Calu3 (cell line): ENCODE measurements at regions of chr1 and their contacts with region 1.

Region 1: DNA sequence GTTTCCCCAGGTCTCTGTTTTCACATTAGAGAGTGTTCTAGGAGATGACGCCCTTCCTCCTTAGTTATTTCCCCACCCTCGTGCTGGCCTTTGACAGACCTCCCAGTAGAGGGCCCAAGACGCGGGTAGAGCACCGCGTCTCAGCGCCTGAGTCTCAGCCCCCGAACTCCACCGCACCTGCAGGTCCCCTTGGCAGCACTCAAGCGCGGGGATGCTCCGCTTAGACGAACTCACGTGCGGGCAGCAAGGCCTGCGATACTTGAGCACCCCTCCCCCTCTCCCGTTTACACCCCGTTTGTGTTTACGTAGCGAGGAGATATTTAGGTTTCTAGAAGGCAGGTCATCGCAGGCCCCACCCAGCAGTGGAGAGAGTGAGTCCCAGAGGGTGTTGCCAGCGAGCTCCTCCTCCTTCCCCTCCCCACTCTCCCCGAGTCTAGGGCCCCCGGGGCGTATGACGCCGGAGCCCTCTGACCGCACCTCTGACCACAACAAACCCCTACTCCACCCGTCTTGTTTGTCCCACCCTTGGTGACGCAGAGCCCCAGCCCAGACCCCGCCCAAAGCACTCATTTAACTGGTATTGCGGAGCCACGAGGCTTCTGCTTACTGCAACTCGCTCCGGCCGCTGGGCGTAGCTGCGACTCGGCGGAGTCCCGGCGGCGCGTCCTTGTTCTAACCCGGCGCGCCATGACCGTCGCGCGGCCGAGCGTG is at the start of gene CD55:
- DNase-seq: peak; percentile 99
- H3K4me3 Mint-ChIP-seq: peak within 1 kb of the TSS; percentile 67
- H3K27ac Mint-ChIP-seq: peak within 1 kb of the TSS; percentile 82
- H3K4me1 Mint-ChIP-seq: peaks cover 37% of the 10 kb centered on the region
- H3K27me3 Mint-ChIP-seq: no peaks in the 10 kb centered on the region
- CTCF ChIP-seq: no peak
- total RNA-seq, gene CD55: 106 and 126 TPM in 2 replicates

Region 2: DNA sequence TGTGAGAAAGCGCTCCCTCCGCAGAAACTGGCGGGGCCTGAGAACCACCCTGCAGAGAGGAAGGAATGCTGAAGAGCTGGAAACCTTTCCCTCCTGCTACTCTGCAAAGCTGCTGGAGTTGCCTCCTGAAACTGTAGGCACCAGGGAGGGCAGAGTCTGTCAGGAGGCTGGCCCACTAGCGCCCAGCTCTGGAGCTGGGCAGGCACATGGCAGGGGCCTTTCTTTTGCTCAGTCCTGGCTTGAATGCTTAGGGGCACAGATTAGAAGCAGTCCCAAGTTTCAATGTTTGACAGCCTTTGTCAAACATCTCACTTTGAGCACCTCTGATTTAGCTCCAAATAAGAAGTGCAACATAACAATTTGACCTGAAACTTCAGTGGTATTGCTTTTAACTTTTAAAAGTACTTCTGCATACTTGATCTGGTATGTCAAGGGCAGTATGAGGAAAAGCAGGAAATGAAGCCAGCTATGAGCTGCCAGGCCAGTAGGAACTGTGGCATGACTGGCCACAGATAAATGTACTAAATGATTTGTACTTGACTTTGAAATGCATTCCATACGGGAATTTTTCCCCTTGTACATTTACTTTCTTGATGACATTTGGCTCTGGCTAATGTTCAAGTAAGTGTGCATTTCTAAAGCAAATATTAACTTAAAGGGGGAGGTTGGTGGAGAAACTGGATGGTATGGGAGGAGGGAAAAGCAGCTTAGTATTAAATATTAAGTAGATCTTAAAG is 295.9 kb before region 1 on chr1:
- CTCF ChIA-PET with region 1: no interaction called
- intact Hi-C with region 1: loop called (anchors 10 kb)
- DNase-seq: no peak
- H3K4me3 Mint-ChIP-seq: peak overlapping the region; percentile 92
- H3K27ac Mint-ChIP-seq: peak overlapping the region; percentile 98
- H3K4me1 Mint-ChIP-seq: peaks cover 96% of the 10 kb centered on the region
- H3K27me3 Mint-ChIP-seq: no peaks in the 10 kb centered on the region
- CTCF ChIP-seq: no peak

Region 3: DNA sequence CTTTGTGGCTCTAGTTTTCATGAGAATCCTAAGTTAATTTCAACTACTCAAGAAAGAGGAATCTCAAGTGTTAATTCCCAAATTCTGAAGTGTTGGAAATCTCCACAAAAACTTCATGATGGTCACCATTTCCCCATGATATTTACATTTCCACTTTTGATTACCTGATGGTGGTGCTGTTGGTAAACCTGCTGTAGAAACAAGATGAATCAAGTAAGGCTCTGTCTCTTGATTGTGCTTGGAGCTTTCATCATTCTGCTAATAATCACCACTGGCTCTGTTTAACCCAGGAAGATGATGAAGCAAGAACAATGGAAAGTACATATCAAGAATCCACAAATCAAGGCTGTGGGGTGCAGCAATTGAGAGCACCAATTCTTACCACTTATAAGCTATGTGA is 139.4 kb before region 1 on chr1:
- CTCF ChIA-PET with region 1: interaction called, 4 read pairs
- intact Hi-C with region 1: loop called (anchors 2 kb)
- DNase-seq: no peak
- H3K4me3 Mint-ChIP-seq: no peak overlapping the region
- H3K27ac Mint-ChIP-seq: no peak overlapping the region
- H3K4me1 Mint-ChIP-seq: peaks cover 5% of the 10 kb centered on the region
- H3K27me3 Mint-ChIP-seq: no peaks in the 10 kb centered on the region
- CTCF ChIP-seq: no peak

Region 4: GRCh38 chr1:207221934-207222351 is 99.3 kb before region 1 on chr1:
- CTCF ChIA-PET with region 1: no interaction called
- intact Hi-C with region 1: no loop called
- DNase-seq: no peak
- H3K4me3 Mint-ChIP-seq: no peak overlapping the region
- H3K27ac Mint-ChIP-seq: peak overlapping the region; percentile 19
- H3K4me1 Mint-ChIP-seq: peaks cover 52% of the 10 kb centered on the region
- H3K27me3 Mint-ChIP-seq: no peaks in the 10 kb centered on the region
- CTCF ChIP-seq: no peak

Region 5: DNA sequence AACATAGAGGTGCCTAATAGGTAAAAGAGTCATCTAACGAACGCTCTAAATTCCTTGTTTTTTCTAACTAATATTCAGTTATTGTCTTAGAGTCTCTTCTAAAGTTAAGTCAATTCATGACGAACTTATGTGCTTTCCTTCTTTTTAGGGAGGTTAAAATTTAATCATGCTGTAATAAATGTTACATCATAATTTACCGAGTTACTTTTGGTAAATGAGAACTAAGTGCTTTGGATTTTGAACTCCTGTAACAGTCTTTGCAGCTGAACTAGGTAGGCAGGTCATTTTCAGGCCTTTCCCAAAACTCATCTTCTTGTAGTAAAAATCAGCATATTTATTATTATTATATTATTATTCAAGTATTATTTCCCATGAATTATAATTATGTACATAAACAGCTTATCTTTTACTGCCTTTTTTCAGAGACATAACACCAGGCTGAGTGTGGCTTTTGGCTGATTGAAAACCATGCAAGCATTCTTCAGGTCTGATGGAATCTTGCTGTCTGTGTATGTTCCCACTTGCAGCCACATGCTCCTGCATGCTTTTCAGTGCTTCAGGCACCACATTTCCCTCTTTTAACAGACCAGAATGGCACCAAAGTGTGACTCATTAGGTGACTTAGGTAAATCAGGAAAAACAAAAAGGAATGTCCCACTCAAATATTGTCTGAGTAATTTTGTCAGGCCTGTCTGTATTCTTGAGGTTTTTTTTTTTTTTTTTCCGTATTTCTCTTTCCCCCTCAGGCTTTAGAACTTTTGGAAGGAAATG is 80.7 kb before region 1 on chr1:
- CTCF ChIA-PET with region 1: no interaction called
- intact Hi-C with region 1: loop called (anchors 2 kb)
- DNase-seq: peak; percentile 32
- H3K4me3 Mint-ChIP-seq: peak overlapping the region; percentile 56
- H3K27ac Mint-ChIP-seq: peak overlapping the region; percentile 97
- H3K4me1 Mint-ChIP-seq: peaks cover 55% of the 10 kb centered on the region
- H3K27me3 Mint-ChIP-seq: no peaks in the 10 kb centered on the region
- CTCF ChIP-seq: no peak

Region 6: DNA sequence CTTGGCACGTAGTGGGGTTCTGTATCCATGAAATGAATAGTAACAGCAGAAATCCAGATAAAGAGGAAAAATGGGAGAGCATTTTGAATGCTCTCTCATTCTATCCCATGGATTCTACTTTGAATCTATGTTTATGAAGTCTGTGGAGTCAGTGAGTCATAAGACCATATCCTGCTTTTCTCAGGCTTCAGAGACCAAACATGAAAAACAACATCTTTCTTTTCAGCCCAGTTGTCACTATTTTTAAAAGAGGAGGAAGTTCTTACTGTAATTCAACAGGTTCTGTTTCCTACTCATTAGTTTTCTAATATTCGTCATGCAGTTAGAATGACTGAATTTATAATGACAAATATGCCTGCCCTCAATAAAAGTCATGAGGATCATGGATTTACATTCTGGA is 39.2 kb before region 1 on chr1:
- CTCF ChIA-PET with region 1: no interaction called
- intact Hi-C with region 1: loop called (anchors 5 kb)
- DNase-seq: no peak
- H3K4me3 Mint-ChIP-seq: peak overlapping the region; percentile 10
- H3K27ac Mint-ChIP-seq: peak overlapping the region; percentile 81
- H3K4me1 Mint-ChIP-seq: peaks cover 38% of the 10 kb centered on the region
- H3K27me3 Mint-ChIP-seq: no peaks in the 10 kb centered on the region
- CTCF ChIP-seq: no peak

Region 7: GRCh38 chr1:207304710-207305151 is 16.5 kb before region 1 on chr1:
- CTCF ChIA-PET with region 1: interaction called, 13 read pairs
- intact Hi-C with region 1: loop called (anchors 2 kb)
- DNase-seq: peak; percentile 49
- H3K4me3 Mint-ChIP-seq: no peak overlapping the region
- H3K27ac Mint-ChIP-seq: peak overlapping the region; percentile 85
- H3K4me1 Mint-ChIP-seq: peaks cover 61% of the 10 kb centered on the region
- H3K27me3 Mint-ChIP-seq: no peaks in the 10 kb centered on the region
- CTCF ChIP-seq: no peak

Region 8: GRCh38 chr1:207404849-207405525 is 83.8 kb after region 1 on chr1:
- CTCF ChIA-PET with region 1: interaction called, 11 read pairs
- intact Hi-C with region 1: loop called (anchors 1 kb)
- DNase-seq: peak; percentile 32
- H3K4me3 Mint-ChIP-seq: no peak overlapping the region
- H3K27ac Mint-ChIP-seq: no peak overlapping the region
- H3K4me1 Mint-ChIP-seq: peaks cover 15% of the 10 kb centered on the region
- H3K27me3 Mint-ChIP-seq: no peaks in the 10 kb centered on the region
- CTCF ChIP-seq: peak; percentile 62

Region 9: DNA sequence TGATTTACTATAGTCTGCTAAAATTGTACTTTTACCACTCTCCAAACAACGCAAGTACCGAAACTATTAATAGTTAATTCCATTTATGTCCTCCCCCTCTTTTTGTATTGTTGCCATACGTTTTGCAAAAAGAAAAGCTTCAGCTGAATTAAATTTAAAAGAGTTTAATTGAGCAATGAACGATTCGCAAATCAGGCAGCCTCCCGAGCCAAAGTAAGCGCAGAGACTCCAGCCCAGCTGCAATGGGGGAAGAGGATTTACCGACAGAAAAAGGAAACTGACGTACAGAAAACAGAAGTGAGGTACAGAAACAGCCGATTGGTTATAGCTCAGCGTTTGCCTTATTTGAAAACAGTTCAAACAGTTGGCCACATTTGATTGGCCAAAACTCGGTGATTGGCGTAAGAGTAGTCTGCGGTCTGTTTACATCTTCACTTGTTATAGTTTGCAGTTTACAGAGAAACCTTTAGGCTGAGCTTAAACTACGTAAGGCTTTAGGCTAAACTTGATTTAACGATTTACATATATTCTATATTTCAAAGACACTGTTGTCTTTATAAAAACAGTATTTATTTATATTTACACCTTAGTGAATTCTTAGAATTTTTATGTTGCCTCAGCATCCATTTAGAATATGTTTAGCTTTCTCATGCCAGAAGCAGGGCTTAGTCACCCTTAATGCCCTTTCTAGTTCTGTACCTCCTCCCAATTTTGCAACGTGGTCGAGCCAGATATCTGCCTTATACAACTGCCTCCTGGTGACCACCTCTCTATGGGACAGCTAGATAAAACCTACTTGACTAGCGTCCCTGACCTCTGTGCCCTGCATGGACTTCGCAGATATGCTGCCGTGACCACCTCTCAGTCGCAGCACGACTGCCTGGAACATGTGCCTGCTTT is 198.5 kb after region 1 on chr1:
- CTCF ChIA-PET with region 1: no interaction called
- intact Hi-C with region 1: no loop called
- DNase-seq: no peak
- H3K4me3 Mint-ChIP-seq: no peak overlapping the region
- H3K27ac Mint-ChIP-seq: no peak overlapping the region
- H3K4me1 Mint-ChIP-seq: no peaks in the 10 kb centered on the region
- H3K27me3 Mint-ChIP-seq: peaks cover 28% of the 10 kb centered on the region
- CTCF ChIP-seq: no peak